ENCODE measurements at regions of chr16 and their contacts with region 1.

Region 1: DNA sequence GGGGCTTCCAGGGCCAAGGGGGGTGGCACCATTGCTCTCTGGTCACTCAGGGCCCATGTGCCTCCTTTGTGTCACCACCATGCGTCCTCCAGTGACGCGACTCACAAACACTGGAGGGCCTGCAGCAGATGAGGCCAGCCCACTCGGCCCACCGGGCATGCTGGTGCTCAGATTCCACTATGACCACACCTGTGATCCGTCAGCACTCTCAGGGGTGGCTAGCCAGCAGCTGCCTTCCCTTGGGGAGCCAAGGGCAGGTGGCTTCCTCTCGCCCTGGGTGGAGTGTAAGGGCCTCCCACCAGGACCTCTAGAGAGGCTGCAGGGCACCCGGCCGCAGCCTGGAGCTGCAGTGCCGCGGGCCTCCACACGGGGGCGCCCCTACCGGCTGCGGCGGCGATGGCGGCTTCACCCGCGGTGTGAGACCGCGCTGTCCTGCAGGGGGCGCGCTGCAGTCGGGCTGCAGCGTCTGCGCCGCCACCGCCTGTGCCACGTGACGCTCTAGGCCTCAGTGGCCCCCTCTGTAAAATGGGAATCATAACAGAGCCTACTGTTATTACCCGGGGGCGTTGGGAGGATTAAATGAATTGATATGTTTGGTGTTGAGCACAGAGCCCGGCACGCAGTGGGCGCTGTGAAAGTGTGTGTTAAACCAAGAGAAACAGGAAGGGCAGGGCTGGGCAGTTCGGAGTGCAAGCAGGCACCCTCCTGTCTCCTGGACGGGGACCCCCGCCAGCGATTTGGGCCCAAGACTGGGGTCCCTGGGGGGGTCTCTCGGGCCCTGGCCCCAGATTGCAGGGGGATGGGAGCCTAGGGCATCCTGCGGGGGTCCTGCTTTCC is 192.4 kb upstream of the GSE1 start:
- DNase-seq: no peak
- H3K4me3 ChIP-seq: no peak overlapping the region
- H3K27me3 ChIP-seq: no peaks in the 10 kb centered on the region
- CTCF ChIP-seq: peak; percentile 76

Region 2: GRCh38 chr16:85402910-85403692 is 17.6 kb before region 1 on chr16:
- CTCF ChIA-PET with region 1: interaction called, 12 read pairs
- POLR2A ChIA-PET with region 1: no interaction called
- DNase-seq: no peak
- H3K4me3 ChIP-seq: no peak overlapping the region
- H3K27me3 ChIP-seq: no peaks in the 10 kb centered on the region
- CTCF ChIP-seq: no peak

Region 3: DNA sequence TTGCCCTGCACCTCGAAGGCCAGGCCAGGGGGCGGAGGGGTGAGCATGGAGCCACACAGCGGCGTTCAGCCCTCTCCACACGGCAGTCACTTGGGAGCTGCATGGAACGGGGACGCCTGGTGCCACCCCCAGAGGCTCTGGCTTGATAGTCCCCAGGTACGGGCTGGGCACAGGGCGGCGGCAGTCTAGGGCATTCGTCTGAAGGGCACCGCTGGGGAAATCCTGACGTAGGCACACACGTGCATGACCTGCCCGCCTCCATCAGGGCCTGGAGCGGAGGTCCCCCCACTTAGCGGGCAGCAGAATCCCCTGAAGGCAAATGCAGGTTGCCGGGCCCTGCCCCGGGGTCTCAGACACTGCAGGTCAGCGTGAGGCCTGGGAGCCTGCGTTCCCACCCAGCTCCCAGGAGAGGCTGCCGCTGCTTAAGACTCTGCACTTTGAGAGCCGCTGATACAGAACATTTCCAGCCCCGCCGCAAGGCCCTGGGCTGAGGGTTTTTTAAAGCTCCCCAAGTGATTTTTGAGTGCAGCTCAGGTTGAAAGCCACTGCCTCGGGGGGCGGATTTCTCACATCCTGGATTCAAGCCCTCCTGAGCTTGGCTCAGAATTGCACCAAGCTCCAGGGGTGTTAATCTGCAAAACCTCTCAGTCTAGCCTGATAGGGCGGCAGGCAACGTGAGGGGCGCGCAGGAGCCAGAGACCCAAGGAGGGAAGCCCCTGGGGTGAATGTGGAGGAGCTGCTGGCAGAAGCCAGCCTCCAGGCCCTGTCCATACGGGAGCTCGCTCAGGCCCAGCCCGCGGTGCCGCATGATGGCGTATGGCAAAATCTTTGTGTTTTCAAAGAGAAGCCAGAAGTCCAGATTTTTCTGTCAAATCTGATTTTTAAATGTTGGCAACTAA is 10.1 kb after region 1 on chr16:
- CTCF ChIA-PET with region 1: interaction called, 21 read pairs
- POLR2A ChIA-PET with region 1: no interaction called
- DNase-seq: no peak
- H3K4me3 ChIP-seq: no peak overlapping the region
- H3K27me3 ChIP-seq: no peaks in the 10 kb centered on the region
- CTCF ChIP-seq: no peak

Region 4: GRCh38 chr16:85437166-85438055 is 16.7 kb after region 1 on chr16:
- CTCF ChIA-PET with region 1: interaction called, 21 read pairs
- POLR2A ChIA-PET with region 1: no interaction called
- DNase-seq: no peak
- H3K4me3 ChIP-seq: no peak overlapping the region
- H3K27me3 ChIP-seq: no peaks in the 10 kb centered on the region
- CTCF ChIP-seq: no peak

Region 5: GRCh38 chr16:85554112-85554813 is 133.5 kb after region 1 on chr16:
- CTCF ChIA-PET with region 1: interaction called, 13 read pairs
- POLR2A ChIA-PET with region 1: no interaction called
- DNase-seq: peak; percentile 37
- H3K4me3 ChIP-seq: peak overlapping the region; percentile 76
- H3K27me3 ChIP-seq: no peaks in the 10 kb centered on the region
- CTCF ChIP-seq: no peak

Region 6: GRCh38 chr16:85610508-85611332 is 190.0 kb after region 1 on chr16:
- CTCF ChIA-PET with region 1: interaction called, 26 read pairs
- POLR2A ChIA-PET with region 1: interaction called, 4 read pairs
- DNase-seq: peak; percentile 19
- H3K4me3 ChIP-seq: peak overlapping the region; percentile 56
- H3K27me3 ChIP-seq: no peaks in the 10 kb centered on the region
- CTCF ChIP-seq: peak; percentile 98

Region 7: GRCh38 chr16:85615852-85616606 is 195.3 kb after region 1 on chr16:
- CTCF ChIA-PET with region 1: interaction called, 26 read pairs
- POLR2A ChIA-PET with region 1: no interaction called
- DNase-seq: no peak
- H3K4me3 ChIP-seq: no peak overlapping the region
- H3K27me3 ChIP-seq: no peaks in the 10 kb centered on the region
- CTCF ChIP-seq: peak; percentile 93